Transverse colon (tissue), 4 donors: ENCODE measurements at regions of chr2 and their contacts with region 1.

Region 1: DNA sequence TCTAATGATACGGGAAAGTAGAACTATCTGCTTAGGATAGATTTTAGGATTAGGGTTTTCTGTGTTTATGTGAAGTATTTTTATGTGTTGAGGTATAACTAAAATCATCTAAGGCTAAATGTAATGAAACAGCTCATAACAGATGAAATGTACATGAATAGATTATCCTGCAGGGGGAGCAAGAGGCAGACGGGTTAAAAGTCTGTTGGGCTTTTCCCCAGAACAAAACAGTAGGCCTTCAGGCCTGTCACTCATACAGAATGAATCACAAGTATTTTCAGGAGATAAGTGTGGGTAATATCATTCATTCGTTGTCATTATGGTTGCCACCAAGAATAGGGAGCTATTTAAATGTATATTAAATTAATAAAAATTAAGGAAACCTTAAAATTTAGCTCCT is 107.9 kb upstream of the IL1R2 start:
- DNase-seq: peak; percentile 31
- H3K4me3 ChIP-seq: no peak overlapping the region
- H3K27ac ChIP-seq: no peak overlapping the region
- H3K4me1 ChIP-seq: peaks cover 0 to 15% (median 5%) of the 10 kb centered on the region in 4 donors
- H3K27me3 ChIP-seq: no peaks in the 10 kb centered on the region
- CTCF ChIP-seq: peak; percentile 60 to 73 (median 68)
- EP300 ChIP-seq: no peak
- POLR2A ChIP-seq: no peak

Region 2: DNA sequence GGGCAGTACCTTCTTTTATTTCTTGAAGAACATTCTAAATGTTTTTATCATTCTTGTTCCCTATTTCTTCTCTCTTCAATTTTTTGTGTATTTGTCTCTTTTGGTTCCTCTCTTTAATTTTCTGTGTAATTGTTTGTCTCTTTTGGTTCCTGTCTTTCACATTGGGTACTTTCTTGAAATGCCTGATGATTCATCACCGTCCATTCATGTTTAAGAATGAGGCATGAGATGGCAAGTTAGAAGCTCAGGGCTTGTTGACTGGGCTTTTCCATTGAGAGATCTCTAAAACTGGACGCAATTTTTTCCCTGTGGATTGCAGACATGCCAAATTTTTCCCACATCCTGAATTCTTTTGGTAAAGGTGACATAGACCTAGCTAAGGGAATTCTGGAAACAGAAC is 74.2 kb after region 1 on chr2:
- in situ Hi-C with region 1: no loop called
- intact Hi-C with region 1: no loop called
- DNase-seq: no peak
- H3K4me3 ChIP-seq: no peak overlapping the region
- H3K27ac ChIP-seq: peak overlapping the region in 1 of 4 donors; percentile 1
- H3K4me1 ChIP-seq: peaks cover 8 to 23% (median 11%) of the 10 kb centered on the region in 4 donors
- H3K27me3 ChIP-seq: no peaks in the 10 kb centered on the region
- CTCF ChIP-seq: no peak
- EP300 ChIP-seq: no peak
- POLR2A ChIP-seq: no peak

Region 3: DNA sequence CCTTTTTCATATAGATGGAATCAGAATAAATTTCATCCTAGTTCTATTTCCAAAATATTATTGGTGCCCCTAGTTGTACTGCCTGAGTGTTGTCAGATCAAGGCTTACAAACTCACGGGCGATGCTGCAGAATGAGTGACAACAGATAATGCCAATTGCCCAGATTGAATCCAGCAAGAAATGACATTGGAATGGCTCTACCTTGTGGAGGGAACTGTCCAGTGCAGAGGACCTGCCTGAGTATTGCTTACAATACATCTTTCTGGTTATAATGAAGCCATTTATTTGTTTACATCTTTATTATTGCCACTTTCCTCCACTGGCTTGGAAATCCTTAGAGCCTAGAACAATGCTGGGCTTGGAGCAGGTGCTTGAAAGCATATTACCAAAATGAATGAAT is 100.1 kb after region 1 on chr2:
- in situ Hi-C with region 1: no loop called
- intact Hi-C with region 1: loop called (anchors 10 kb)
- DNase-seq: no peak
- H3K4me3 ChIP-seq: no peak overlapping the region
- H3K27ac ChIP-seq: peak overlapping the region in 1 of 4 donors; percentile 82
- H3K4me1 ChIP-seq: peaks cover 3 to 45% (median 34%) of the 10 kb centered on the region in 4 donors
- H3K27me3 ChIP-seq: no peaks in the 10 kb centered on the region
- CTCF ChIP-seq: peak; percentile 16 to 53 (median 41)
- EP300 ChIP-seq: no peak
- POLR2A ChIP-seq: no peak

Region 4: DNA sequence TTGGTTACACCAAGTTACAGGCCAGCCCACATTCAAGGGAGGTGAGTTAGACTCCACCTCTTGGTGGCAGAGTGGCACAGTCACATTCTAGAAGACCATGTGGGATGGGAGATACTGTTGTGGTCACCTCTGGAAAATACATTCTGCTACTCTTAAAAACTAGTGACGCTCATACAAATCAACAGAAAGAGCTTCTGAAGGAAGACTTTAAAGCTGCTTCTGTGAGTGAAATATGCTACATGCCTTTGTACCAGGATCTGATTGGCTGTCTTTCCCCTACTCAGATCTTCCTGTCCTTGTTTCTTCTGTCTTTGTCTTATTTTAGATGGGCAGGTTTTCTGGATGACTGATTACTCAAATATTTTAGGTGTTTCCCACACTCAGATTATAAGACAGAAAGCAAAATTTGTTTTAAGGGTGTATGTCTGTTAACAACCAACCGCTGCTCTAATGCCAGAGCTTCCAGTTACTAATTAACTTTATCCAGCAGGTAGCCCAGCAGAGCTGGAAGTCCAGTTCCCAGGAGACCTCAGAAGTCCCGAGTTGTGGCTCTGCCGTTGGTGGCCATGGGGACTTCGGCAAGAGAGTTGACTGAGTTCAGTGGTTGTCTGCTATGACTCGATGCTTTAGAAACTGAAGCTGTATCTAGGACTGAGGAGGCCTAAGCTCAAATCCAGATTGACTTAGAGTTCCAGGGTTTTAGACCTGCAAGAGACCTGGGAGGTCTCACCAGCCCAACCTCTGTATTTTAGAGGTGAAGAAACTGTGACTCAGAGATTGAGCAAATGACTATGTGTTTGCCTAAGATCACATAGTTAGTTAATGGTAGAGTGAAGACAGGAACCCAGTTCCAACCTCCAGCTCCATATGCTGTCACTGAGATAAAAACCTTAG is 115.3 kb after region 1 on chr2:
- in situ Hi-C with region 1: loop called in 1 of 4 experiments (anchors 10 kb)
- intact Hi-C with region 1: no loop called
- DNase-seq: peak; percentile 53
- H3K4me3 ChIP-seq: peak overlapping the region in 1 of 4 donors; percentile 22
- H3K27ac ChIP-seq: peak overlapping the region; percentile 60 to 77 (median 68)
- H3K4me1 ChIP-seq: peaks cover 0 to 29% (median 5%) of the 10 kb centered on the region in 4 donors
- H3K27me3 ChIP-seq: no peaks in the 10 kb centered on the region
- CTCF ChIP-seq: no peak
- EP300 ChIP-seq: no peak
- POLR2A ChIP-seq: peak; percentile 42

Region 5: GRCh38 chr2:102141970-102142828 is 258.3 kb after region 1 on chr2 and contains the start of gene IL1R1:
- in situ Hi-C with region 1: no loop called
- intact Hi-C with region 1: loop called (anchors 10 kb)
- DNase-seq: peak; percentile 81
- H3K4me3 ChIP-seq: peak within 1 kb of the TSS; percentile 49 to 71 (median 58)
- H3K27ac ChIP-seq: peak within 1 kb of the TSS; percentile 88 to 93 (median 92)
- H3K4me1 ChIP-seq: peaks cover 0 to 6% (median 3%) of the 10 kb centered on the region in 4 donors
- H3K27me3 ChIP-seq: no peaks in the 10 kb centered on the region
- CTCF ChIP-seq: no peak
- EP300 ChIP-seq: no peak
- POLR2A ChIP-seq: peak; percentile 75
- total RNA-seq, gene IL1R1: 20.2 to 58.0 (median 36.2) TPM

Region 6: DNA sequence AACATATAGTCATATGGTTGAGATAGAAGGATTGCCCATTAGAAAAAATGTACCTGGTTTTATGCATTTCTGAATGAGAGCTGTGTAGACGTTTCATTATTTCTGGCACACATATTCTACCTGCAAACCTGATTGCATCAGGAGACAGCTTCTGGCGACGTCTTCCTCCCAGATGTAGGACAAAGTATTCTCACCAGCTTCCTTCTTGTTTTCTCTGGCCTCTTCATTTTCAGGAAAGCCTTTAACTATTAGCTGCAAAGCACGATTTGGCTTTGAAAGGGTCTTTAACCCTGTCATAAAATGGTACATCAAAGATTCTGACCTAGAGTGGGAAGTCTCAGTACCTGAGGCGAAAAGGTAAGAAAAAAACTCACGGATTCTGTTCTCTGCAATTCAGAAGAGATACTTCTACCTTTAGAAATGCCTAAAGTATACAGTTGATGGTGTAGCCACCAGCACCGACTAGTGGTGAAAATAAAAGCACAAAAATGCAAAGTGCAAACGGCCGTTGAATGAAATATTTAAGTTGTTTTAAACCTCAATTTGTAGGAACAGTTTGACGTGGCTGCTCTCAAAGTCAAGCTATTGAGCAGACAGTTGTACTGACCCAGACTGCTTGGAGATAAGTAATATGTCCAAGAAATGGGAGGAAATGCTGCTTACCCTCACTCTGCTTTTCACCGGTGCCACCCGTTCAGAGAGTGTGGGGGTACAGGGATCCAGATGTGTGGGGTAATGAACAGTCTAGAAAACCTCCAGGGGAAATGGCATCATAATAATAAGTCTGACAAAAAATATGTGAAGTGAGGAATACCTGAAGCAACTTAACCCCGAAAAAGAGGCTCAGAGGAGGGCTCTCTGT is 559.3 kb after region 1 on chr2:
- in situ Hi-C with region 1: loop called in 2 of 4 experiments (anchors 25 kb)
- intact Hi-C with region 1: no loop called
- DNase-seq: peak; percentile 22
- H3K4me3 ChIP-seq: no peak overlapping the region
- H3K27ac ChIP-seq: peak overlapping the region in 1 of 4 donors; percentile 11
- H3K4me1 ChIP-seq: peaks cover 0 to 9% (median 0%) of the 10 kb centered on the region in 4 donors
- H3K27me3 ChIP-seq: no peaks in the 10 kb centered on the region
- CTCF ChIP-seq: peak; percentile 59 to 75 (median 69)
- EP300 ChIP-seq: no peak
- POLR2A ChIP-seq: no peak